PC-9 (cell line): ENCODE measurements at regions of chr17 and their contacts with region 1.

Region 1: DNA sequence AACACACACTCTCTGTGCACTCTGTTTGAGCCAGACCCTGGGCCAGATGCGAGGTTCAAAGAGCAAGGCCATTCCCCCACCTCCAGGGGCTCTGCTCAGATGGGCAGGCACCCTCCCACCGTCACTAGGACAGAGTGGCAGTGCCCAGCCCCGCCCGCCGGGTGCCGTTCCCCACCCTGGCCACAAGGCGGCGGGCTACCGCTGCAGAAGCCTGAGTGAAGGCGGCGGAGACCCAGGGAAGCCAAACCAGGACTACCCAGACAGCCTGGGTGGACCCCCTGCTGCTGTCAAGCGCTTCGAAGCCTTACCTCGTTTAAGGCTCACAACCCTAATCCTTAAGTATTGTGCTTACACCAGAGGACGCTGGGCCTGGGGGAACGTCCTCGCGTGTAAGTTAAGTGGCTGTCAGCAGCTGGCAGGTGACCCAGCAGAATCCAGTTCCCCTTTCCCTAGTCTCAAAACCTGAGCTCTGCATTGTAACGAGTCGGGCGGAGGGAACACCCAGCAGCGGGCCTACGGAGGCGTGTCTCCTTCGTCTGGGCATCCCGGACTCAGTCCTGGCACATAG is 4.5 kb downstream of the ARHGAP27 start:
- DNase-seq: peak; percentile 63 to 79
- H3K4me3 ChIP-seq: no peak overlapping the region
- H3K27ac ChIP-seq: no peak overlapping the region
- H3K4me1 ChIP-seq: peaks cover 37% of the 10 kb centered on the region
- H3K27me3 ChIP-seq: no peaks in the 10 kb centered on the region
- CTCF ChIP-seq: peak; percentile 99

Region 2: GRCh38 chr17:45155029-45155428 is 273.1 kb before region 1 on chr17:
- CTCF ChIA-PET with region 1: interaction called, 13 read pairs
- POLR2A ChIA-PET with region 1: interaction called, 41 read pairs
- intact Hi-C with region 1: no loop called
- DNase-seq: peak in 1 of 2 experiments; percentile 74
- H3K4me3 ChIP-seq: peak overlapping the region; percentile 36; the same call in 1 of the 2 replicates
- H3K27ac ChIP-seq: peak overlapping the region; percentile 75
- H3K4me1 ChIP-seq: peaks cover 72% of the 10 kb centered on the region
- H3K27me3 ChIP-seq: no peaks in the 10 kb centered on the region
- CTCF ChIP-seq: 0 out of 2 replicates have a peak, but pooled peaks have one; percentile 21

Region 3: GRCh38 chr17:45277216-45277849 is 150.8 kb before region 1 on chr17:
- CTCF ChIA-PET with region 1: interaction called, 6 read pairs
- POLR2A ChIA-PET with region 1: no interaction called
- intact Hi-C with region 1: loop called (anchors 5 kb)
- DNase-seq: peak; percentile 88 to 89
- H3K4me3 ChIP-seq: no peak overlapping the region
- H3K27ac ChIP-seq: peak overlapping the region; percentile 17
- H3K4me1 ChIP-seq: peaks cover 18% of the 10 kb centered on the region
- H3K27me3 ChIP-seq: no peaks in the 10 kb centered on the region
- CTCF ChIP-seq: peak; percentile 95

Region 4: GRCh38 chr17:45317112-45317928 is 110.8 kb before region 1 on chr17:
- CTCF ChIA-PET with region 1: interaction called, 12 read pairs
- POLR2A ChIA-PET with region 1: interaction called, 5 read pairs
- intact Hi-C with region 1: no loop called
- DNase-seq: peak; percentile 99 to 100
- H3K4me3 ChIP-seq: peak overlapping the region; percentile 68
- H3K27ac ChIP-seq: peak overlapping the region; percentile 95
- H3K4me1 ChIP-seq: peaks cover 81% of the 10 kb centered on the region
- H3K27me3 ChIP-seq: no peaks in the 10 kb centered on the region
- CTCF ChIP-seq: no peak

Region 5: GRCh38 chr17:45410144-45411091 is 17.7 kb before region 1 on chr17:
- CTCF ChIA-PET with region 1: no interaction called
- POLR2A ChIA-PET with region 1: no interaction called
- intact Hi-C with region 1: no loop called
- DNase-seq: no peak
- H3K4me3 ChIP-seq: no peak overlapping the region
- H3K27ac ChIP-seq: no peak overlapping the region
- H3K4me1 ChIP-seq: no peaks in the 10 kb centered on the region
- H3K27me3 ChIP-seq: no peaks in the 10 kb centered on the region
- CTCF ChIP-seq: no peak

Region 6: GRCh38 chr17:45584092-45585036 is 156.2 kb after region 1 on chr17:
- CTCF ChIA-PET with region 1: no interaction called
- POLR2A ChIA-PET with region 1: interaction called, 3 read pairs
- intact Hi-C with region 1: loop called (anchors 2 kb)
- DNase-seq: peak; percentile 42 to 60
- H3K4me3 ChIP-seq: peak overlapping the region; percentile 76
- H3K27ac ChIP-seq: no peak overlapping the region
- H3K4me1 ChIP-seq: peaks cover 20% of the 10 kb centered on the region
- H3K27me3 ChIP-seq: no peaks in the 10 kb centered on the region
- CTCF ChIP-seq: no peak